HCT116 (cell line): ENCODE measurements at regions of chr3 and their contacts with region 1.

Region 1: GRCh38 chr3:179811321-179812095 is 158.7 kb downstream of the USP13 start:
- DNase-seq: peak; percentile 61
- ATAC-seq: peak; percentile 97
- H3K4me3 ChIP-seq: no peak overlapping the region
- H3K27ac ChIP-seq: no peak overlapping the region
- H3K4me1 ChIP-seq: no peaks in the 10 kb centered on the region; a peak in 1 of 4 replicates
- H3K27me3 ChIP-seq: no peaks in the 10 kb centered on the region
- CTCF ChIP-seq: peak; percentile 48 to 86 (median 68); a peak in 5 of 6 replicates
- POLR2A ChIP-seq: no peak
- RAD21 ChIP-seq: peak; percentile 87

Region 2: GRCh38 chr3:179299999-179300613 is 511.4 kb before region 1 on chr3:
- CTCF ChIA-PET with region 1: no interaction called
- POLR2A ChIA-PET with region 1: no interaction called
- RAD21 ChIA-PET with region 1: no interaction called
- intact Hi-C with region 1: no loop called
- DNase-seq: no peak
- ATAC-seq: no peak
- H3K4me3 ChIP-seq: no peak overlapping the region
- H3K27ac ChIP-seq: no peak overlapping the region
- H3K4me1 ChIP-seq: no peaks in the 10 kb centered on the region
- H3K27me3 ChIP-seq: no peaks in the 10 kb centered on the region
- CTCF ChIP-seq: no peak
- POLR2A ChIP-seq: no peak
- RAD21 ChIP-seq: no peak

Region 3: GRCh38 chr3:179852142-179852905 is 40.8 kb after region 1 on chr3:
- CTCF ChIA-PET with region 1: interaction called, 14 read pairs
- POLR2A ChIA-PET with region 1: no interaction called
- RAD21 ChIA-PET with region 1: interaction called in 1 of 2 experiments, 3 read pairs
- intact Hi-C with region 1: no loop called
- DNase-seq: no peak
- ATAC-seq: peak; percentile 80
- H3K4me3 ChIP-seq: no peak overlapping the region
- H3K27ac ChIP-seq: no peak overlapping the region
- H3K4me1 ChIP-seq: no peaks in the 10 kb centered on the region
- H3K27me3 ChIP-seq: no peaks in the 10 kb centered on the region
- CTCF ChIP-seq: peak in 2 of 3 experiments; percentile 21 to 29; a peak in 1 of 6 replicates
- POLR2A ChIP-seq: no peak
- RAD21 ChIP-seq: peak; percentile 11; the same call in 1 of the 2 replicates

Region 4: DNA sequence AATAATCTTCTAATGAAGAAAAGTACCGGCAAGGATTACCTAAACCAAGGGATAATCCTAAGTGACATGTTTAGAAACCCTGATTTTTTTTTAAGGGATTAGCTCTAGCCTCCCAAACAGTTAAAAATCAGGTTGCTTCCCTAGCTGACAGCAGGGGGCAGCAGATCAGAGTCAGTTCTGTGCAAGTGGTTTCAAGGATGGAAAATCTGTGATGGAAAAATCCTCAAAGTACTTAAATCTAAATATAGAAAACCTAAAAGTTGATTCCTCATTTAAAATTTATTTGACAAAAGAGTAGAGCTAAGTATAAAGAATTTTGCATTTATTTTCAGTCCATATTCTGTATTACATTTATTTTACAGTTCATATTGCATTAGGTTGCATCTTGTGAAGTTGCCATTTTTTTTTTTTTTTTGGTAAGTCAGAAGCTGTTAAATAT is 117.6 kb after region 1 on chr3:
- CTCF ChIA-PET with region 1: interaction called, 7 read pairs
- POLR2A ChIA-PET with region 1: no interaction called
- RAD21 ChIA-PET with region 1: no interaction called
- intact Hi-C with region 1: loop called (anchors 5 kb)
- DNase-seq: peak; percentile 37
- ATAC-seq: peak; percentile 69
- H3K4me3 ChIP-seq: no peak overlapping the region
- H3K27ac ChIP-seq: no peak overlapping the region
- H3K4me1 ChIP-seq: no peaks in the 10 kb centered on the region
- H3K27me3 ChIP-seq: peaks cover 46% of the 10 kb centered on the region
- CTCF ChIP-seq: peak; percentile 41 to 83 (median 79); a peak in 5 of 6 replicates
- POLR2A ChIP-seq: no peak
- RAD21 ChIP-seq: peak; percentile 64

Region 5: DNA sequence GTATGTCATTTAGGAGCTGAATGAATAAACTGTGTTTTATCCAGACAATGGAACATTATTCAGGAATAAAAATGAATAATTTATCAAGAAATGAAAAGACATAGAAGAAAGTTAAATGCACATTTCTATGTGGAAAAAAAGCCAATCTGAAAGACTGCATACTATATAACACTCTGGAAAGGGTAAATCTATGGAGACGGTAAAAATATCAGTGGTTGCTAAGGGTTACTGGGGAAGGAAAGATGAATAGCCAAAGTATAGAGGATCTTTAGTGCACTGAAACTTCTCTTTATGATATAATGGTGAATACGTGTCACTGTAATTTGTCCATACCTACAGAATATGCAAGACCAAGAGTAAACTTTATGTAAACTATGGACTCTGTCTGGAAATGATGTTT is 271.2 kb after region 1 on chr3:
- CTCF ChIA-PET with region 1: interaction called, 3 read pairs
- POLR2A ChIA-PET with region 1: no interaction called
- RAD21 ChIA-PET with region 1: no interaction called
- intact Hi-C with region 1: loop called (anchors 5 kb)
- DNase-seq: no peak
- ATAC-seq: no peak
- H3K4me3 ChIP-seq: no peak overlapping the region
- H3K27ac ChIP-seq: no peak overlapping the region
- H3K4me1 ChIP-seq: no peaks in the 10 kb centered on the region
- H3K27me3 ChIP-seq: 0 out of 2 replicates have a peak, but pooled peaks cover 5% of the 10 kb centered on the region
- CTCF ChIP-seq: no peak
- POLR2A ChIP-seq: no peak
- RAD21 ChIP-seq: no peak

Region 6: DNA sequence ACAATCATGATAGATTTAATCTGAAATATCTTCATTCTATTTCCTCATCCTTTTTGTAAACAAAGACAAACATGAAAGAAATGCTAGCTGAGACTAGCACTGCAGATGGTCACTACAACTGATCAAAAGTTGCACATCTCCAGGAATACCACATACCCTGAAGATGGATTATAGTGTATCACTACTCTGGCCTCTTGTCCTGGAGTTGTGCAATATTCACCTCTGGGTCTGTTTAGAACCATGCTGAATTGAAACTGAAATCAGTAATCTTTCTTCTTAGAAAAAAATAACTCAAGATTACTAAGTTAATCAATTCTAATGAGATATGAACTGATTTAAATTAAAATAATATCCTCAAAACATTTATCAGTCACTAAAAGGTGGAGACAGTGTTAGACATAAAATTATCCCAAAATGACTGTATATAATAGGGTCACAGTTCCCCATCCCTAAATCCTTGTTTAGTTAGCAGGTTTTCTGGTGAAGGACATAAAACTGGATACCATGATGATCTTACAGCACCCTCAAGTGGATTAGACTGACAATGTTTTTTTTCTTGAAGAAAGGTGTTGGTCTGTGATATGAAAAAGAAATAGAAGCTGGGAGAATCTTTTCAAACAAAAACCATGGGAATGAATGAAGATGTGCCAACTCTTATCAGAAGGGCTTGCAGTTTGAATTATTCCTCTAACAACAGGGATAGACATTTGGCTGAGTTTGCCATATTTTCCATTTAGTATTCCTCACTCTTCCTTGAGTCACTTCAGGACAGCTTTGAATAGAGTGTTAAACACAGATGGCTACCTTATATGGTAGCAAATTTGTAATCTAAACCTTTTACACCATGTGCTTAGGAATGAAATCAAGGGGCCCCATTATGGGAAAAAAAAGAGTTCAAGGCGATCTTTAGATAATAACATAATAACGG is 783.4 kb after region 1 on chr3:
- CTCF ChIA-PET with region 1: interaction called, 17 read pairs
- POLR2A ChIA-PET with region 1: no interaction called
- RAD21 ChIA-PET with region 1: no interaction called
- intact Hi-C with region 1: loop called (anchors 5 kb)
- DNase-seq: peak; percentile 22
- ATAC-seq: peak; percentile 71
- H3K4me3 ChIP-seq: no peak overlapping the region
- H3K27ac ChIP-seq: no peak overlapping the region
- H3K4me1 ChIP-seq: no peaks in the 10 kb centered on the region
- H3K27me3 ChIP-seq: no peaks in the 10 kb centered on the region
- CTCF ChIP-seq: peak; percentile 29 to 49 (median 36); a peak in 4 of 6 replicates
- POLR2A ChIP-seq: no peak
- RAD21 ChIP-seq: peak; percentile 78

Region 7: DNA sequence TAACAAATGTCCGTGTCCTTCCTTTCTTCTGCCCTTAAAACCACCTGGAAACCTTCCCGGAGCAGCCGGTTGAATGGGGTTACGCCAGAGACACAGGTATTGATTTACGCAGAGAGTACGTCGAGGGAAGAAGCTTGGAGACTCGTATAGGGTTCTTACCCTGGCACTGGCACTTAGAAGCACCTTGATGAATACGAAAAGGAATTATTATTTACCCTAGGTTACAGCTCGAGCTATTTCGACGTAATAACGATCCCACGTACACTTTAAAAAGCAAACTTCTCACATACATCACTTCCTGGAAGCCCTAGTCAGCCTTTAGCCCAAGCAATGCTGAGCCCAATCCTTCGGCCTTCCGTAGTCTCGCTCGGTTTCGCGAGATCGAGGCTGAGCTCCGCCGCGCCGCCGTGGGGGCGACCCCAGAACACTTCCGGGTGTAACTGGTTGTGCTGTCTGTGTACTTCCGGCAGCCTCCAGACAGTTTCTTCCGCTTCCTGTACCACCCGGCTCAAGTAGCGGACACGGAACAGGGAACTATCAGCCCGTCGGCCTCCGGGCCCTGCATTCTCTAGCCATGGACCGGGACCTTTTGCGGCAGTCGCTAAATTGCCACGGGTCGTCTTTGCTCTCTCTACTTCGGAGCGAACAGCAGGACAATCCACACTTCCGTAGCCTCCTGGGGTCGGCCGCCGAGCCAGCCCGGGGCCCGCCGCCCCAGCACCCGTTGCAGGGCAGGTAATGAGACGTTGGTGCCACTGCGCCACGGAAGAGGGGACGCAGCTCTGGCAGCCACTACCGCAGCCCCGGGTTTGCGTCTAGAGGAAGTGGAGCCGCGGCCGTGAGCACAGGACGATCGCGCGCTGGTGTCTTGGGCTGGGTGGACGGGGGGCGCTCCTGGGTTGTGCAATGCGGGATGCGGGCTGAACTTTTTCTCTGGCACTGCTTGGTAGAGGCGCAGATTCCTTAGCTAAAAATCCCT is 790.5 kb after region 1 on chr3 and contains the start of gene TTC14:
- CTCF ChIA-PET with region 1: interaction called, 3 read pairs
- POLR2A ChIA-PET with region 1: no interaction called
- RAD21 ChIA-PET with region 1: no interaction called
- intact Hi-C with region 1: loop called (anchors 5 kb)
- DNase-seq: peak; percentile 94
- ATAC-seq: peak; percentile 95
- H3K4me3 ChIP-seq: peak within 1 kb of the TSS; percentile 89 to 95
- H3K27ac ChIP-seq: peak within 1 kb of the TSS; percentile 77
- H3K4me1 ChIP-seq: peaks cover 8 to 12% of the 10 kb centered on the region in 2 experiments; a peak in 3 of 4 replicates
- H3K27me3 ChIP-seq: no peaks in the 10 kb centered on the region
- CTCF ChIP-seq: no peak
- POLR2A ChIP-seq: peak; percentile 64
- RAD21 ChIP-seq: no peak
- total RNA-seq, gene TTC14: 31.5 TPM